Mammary epithelial cell (primary cell): ENCODE measurements at regions of chr3 and their contacts with region 1.

Region 1: GRCh38 chr3:69542221-69543079 is 156.6 kb upstream of the FRMD4B start:
- DNase-seq: peak; percentile 67
- H3K4me3 ChIP-seq: peak overlapping the region; percentile 77 to 89 (median 88)
- H3K27ac ChIP-seq: peak overlapping the region; percentile 94
- H3K4me1 ChIP-seq: peaks cover 20% of the 10 kb centered on the region
- H3K27me3 ChIP-seq: no peaks in the 10 kb centered on the region
- CTCF ChIP-seq: no peak

Region 2: GRCh38 chr3:69439643-69440270 is 102.7 kb before region 1 on chr3:
- CTCF ChIA-PET with region 1: no interaction called
- dilution Hi-C with region 1: no loop called
- in situ Hi-C with region 1: no loop called
- intact Hi-C with region 1: loop called (anchors 1 kb)
- DNase-seq: no peak
- H3K4me3 ChIP-seq: no peak overlapping the region
- H3K27ac ChIP-seq: no peak overlapping the region
- H3K4me1 ChIP-seq: no peaks in the 10 kb centered on the region
- H3K27me3 ChIP-seq: no peaks in the 10 kb centered on the region
- CTCF ChIP-seq: peak; percentile 66 to 70

Region 3: DNA sequence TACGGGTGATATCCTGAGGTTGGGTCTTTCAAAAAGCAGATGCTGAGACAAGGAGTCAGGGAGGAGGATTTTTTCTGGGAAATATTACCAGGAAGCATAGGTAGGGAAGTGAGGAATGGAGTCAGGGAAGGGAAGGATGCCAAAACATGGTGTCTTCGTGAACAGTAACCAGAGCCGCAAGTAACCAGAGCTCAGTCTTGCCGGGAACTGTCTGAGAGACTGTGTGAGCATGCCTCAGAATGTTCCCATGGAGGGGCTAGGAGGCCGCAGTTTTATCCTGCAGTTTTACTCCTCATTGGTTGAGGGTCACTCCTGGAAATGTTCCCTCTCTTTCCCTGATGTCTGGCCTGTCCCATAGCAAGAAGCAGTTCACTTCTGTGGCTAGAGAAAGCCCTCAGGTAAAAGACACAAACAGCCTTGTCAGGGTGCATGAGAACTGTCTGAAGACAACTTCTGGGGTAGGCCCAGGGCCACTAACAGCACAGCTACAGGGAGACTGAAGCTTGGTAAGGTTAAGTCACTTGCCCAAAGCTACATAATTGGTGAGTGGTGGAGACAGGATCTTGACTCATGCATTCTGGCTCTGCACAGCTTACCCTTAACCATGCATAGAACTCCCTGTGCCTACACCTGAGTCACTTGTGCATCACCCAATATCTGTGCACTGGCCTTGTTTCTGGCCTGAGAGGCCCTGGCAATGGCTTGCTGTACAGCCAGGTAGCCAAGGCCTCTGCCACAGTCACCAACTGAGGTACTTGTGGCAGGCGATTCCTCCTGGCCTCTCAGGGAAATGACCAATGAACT is 80.2 kb before region 1 on chr3:
- CTCF ChIA-PET with region 1: no interaction called
- dilution Hi-C with region 1: no loop called
- in situ Hi-C with region 1: no loop called
- intact Hi-C with region 1: loop called (anchors 5 kb)
- DNase-seq: peak; percentile 83
- H3K4me3 ChIP-seq: no peak overlapping the region
- H3K27ac ChIP-seq: peak overlapping the region; percentile 4
- H3K4me1 ChIP-seq: peaks cover 53% of the 10 kb centered on the region
- H3K27me3 ChIP-seq: no peaks in the 10 kb centered on the region
- CTCF ChIP-seq: no peak

Region 4: DNA sequence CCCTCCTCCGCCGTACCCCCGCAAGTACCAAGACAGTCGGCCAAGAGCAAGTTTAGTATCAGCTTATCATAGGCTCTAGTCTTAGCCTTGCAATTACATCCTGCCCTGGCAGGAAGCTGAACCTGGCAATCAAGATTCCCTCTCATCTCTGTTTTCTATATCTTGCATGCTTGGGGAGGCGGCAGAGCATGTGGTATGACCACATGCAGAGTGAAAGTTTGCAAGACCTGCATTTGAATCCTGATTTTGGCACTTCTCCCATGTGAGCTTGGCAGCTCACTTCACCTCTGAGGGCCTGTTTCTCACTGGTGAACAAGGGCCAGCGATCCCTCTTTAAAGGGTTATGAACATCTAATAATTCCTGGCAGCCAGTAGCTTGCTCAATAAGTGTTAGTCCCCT is 50.5 kb before region 1 on chr3:
- CTCF ChIA-PET with region 1: no interaction called
- dilution Hi-C with region 1: no loop called
- in situ Hi-C with region 1: no loop called
- intact Hi-C with region 1: no loop called
- DNase-seq: no peak
- H3K4me3 ChIP-seq: no peak overlapping the region
- H3K27ac ChIP-seq: no peak overlapping the region
- H3K4me1 ChIP-seq: no peaks in the 10 kb centered on the region
- H3K27me3 ChIP-seq: no peaks in the 10 kb centered on the region
- CTCF ChIP-seq: no peak